Right ventricle myocardium superior (tissue), 1 donor: ENCODE measurements at regions of chr22 and their contacts with region 1.

Region 1: GRCh38 chr22:26529345-26529744 is 17.1 kb upstream of the TFIP11 start:
- DNase-seq: no peak
- ATAC-seq: no peak

Region 2: DNA sequence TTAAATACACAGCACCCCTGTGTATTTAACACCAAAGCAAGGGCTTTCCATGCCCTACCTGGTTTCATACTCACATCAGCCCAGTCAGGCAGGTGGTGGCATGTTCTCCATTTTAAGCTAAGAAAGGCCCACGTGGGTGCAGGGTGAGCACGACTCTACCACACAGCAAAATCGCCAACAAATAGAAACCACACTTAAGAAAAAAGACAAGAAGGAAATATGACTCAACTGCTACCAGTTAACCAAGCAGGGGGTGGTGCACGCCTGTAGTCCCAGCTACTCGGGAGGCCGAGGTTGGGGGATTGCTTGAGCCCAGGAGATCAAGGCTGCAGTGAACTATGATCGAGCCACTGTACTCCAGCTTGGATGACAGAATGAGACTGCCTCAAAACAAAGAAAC is 18.1 kb after region 1 on chr22:
- intact Hi-C with region 1: loop called (anchors 2 kb)
- DNase-seq: no peak
- ATAC-seq: no peak